Calu3 (cell line): ENCODE measurements at regions of chr2 and their contacts with region 1.

Region 1: DNA sequence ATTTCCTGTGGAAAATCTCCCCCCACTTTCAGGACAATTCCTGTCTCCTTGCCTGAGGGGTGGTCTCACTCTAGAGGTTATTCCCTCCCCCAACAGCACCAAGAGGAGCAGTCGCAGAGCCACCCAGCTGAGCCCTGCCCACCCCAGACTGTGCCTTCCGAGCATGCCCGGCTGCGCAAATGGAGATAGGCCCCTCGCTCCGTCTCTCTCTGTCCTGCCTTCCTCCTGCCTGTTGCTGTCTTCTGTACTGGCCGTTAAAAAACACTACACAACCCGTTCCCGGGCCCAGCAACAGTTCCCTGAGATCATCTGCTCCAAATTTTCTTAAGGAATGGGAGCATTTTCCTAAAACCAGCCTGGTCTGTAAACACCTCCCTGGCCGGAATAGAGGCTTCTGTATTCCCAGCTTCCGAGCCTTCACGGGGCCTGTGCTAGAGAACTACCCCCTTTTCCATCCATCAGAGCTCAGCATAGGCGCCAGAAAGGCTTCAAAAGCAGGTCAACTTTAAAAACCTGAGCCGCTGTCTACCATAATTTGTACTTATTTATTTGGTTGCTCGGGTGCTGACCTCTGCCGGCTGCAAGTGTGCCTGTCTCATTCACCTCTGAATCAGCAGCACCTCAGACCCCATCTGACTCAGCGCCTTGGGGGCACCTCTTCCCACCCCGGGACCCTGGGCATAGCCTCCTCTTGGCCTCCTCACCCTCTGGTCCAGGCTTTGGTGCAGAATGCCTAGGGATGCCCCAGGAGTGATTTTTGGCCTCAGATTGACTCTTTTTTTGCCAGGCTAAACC is 159.4 kb downstream of the PXDN start:
- DNase-seq: no peak
- H3K4me3 Mint-ChIP-seq: no peak overlapping the region
- H3K27ac Mint-ChIP-seq: no peak overlapping the region
- H3K4me1 Mint-ChIP-seq: peaks cover 7% of the 10 kb centered on the region
- H3K27me3 Mint-ChIP-seq: no peaks in the 10 kb centered on the region
- CTCF ChIP-seq: no peak

Region 2: GRCh38 chr2:1553671-1554295 is 31.1 kb before region 1 on chr2:
- CTCF ChIA-PET with region 1: interaction called, 8 read pairs
- intact Hi-C with region 1: loop called (anchors 1 kb)
- DNase-seq: peak; percentile 49
- H3K4me3 Mint-ChIP-seq: no peak overlapping the region
- H3K27ac Mint-ChIP-seq: peak overlapping the region; percentile 68
- H3K4me1 Mint-ChIP-seq: no peaks in the 10 kb centered on the region
- H3K27me3 Mint-ChIP-seq: no peaks in the 10 kb centered on the region
- CTCF ChIP-seq: no peak

Region 3: GRCh38 chr2:1656331-1656960 is 71.6 kb after region 1 on chr2:
- CTCF ChIA-PET with region 1: no interaction called
- intact Hi-C with region 1: no loop called
- DNase-seq: no peak
- H3K4me3 Mint-ChIP-seq: no peak overlapping the region
- H3K27ac Mint-ChIP-seq: no peak overlapping the region
- H3K4me1 Mint-ChIP-seq: no peaks in the 10 kb centered on the region
- H3K27me3 Mint-ChIP-seq: no peaks in the 10 kb centered on the region
- CTCF ChIP-seq: no peak